ENCODE measurements at regions of chr1 and their contacts with region 1.

Region 1: DNA sequence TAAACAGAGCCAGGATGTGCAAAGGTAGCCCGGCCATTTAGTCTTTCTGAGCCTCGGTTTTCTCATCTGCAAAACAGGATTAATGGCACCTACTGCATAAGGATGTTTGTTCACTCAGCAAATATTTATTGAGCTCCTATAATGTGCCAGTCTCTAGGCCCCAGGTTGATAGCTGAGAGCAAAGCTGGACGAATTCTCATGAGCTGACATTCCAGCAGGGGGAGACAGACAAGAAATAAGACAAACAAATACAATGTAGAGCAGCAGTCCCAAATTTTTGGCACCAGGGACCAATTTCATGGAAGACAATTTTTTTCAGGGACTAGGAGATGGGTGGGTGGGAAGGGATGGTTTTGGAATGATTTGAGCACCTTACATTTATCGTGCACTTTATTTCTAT is 74.3 kb upstream of the PAX7 start:
- DNase-seq: peak; percentile 65
- H3K4me3 ChIP-seq: no peak overlapping the region
- H3K27ac ChIP-seq: no peak overlapping the region
- H3K4me1 ChIP-seq: peaks cover 14% of the 10 kb centered on the region
- H3K27me3 ChIP-seq: no peaks in the 10 kb centered on the region
- CTCF ChIP-seq: peak; percentile 70

Region 2: DNA sequence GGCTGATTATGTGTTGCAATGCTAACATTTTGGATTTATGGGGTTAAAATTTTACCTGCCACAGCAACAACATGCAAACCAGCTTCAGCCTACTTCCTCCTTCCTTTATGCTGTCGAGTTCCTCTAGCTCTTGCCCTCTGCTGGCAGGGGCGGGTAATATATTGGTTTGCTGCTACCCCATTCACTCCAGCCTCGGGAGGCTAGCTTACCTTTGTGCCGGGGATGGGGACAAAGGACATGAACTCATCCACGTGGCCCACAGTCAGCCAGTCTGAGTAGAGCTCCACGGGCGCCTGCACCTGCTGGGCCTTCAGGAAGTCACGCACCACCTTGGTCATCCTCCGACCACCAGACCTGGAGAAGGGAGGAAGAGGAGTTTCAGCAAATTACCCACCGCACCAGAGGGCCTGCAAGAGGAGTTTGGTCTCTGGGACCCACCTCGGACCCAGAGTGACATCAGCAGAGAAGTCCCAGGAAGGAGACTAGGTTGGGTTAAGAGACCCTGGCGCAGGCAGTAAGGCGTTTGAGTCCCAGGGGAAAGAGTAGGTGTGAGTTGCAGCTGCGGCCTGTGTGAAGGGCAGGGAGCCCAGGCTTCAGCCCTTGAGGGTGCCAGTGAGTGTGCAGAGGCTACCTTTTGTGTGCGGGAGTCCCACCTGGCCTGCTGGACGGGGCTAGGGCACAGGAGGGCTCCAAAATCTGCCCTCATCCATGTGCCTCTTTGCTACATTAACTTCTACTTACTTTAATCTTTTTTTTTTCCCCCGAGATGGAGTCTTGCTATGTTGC is 1480.7 kb before region 1 on chr1:
- CTCF ChIA-PET with region 1: no interaction called
- POLR2A ChIA-PET with region 1: no interaction called
- intact Hi-C with region 1: no loop called
- DNase-seq: peak; percentile 50
- H3K4me3 ChIP-seq: no peak overlapping the region
- H3K27ac ChIP-seq: no peak overlapping the region
- H3K4me1 ChIP-seq: no peaks in the 10 kb centered on the region
- H3K27me3 ChIP-seq: no peaks in the 10 kb centered on the region
- CTCF ChIP-seq: peak; percentile 43; the same call in 1 of the 2 replicates

Region 3: GRCh38 chr1:18575620-18576019 is 19.3 kb after region 1 on chr1:
- CTCF ChIA-PET with region 1: interaction called, 25 read pairs
- POLR2A ChIA-PET with region 1: no interaction called
- intact Hi-C with region 1: no loop called
- DNase-seq: peak; percentile 79
- H3K4me3 ChIP-seq: no peak overlapping the region
- H3K27ac ChIP-seq: no peak overlapping the region
- H3K4me1 ChIP-seq: no peaks in the 10 kb centered on the region
- H3K27me3 ChIP-seq: no peaks in the 10 kb centered on the region
- CTCF ChIP-seq: peak; percentile 92